ENCODE measurements at regions of chr3 and their contacts with region 1.

Region 1: GRCh38 chr3:5057857-5058324 is 64.2 kb upstream of the ARL8B start:
- DNase-seq: peak in 9 of 10 donors; percentile 50 to 78 (median 68)
- H3K4me3 ChIP-seq: no peak overlapping the region
- H3K27ac ChIP-seq: no peak overlapping the region
- H3K27me3 ChIP-seq: no peaks in the 10 kb centered on the region
- CTCF ChIP-seq: peak; percentile 46 to 81 (median 72)

Region 2: GRCh38 chr3:4656059-4656458 is 401.8 kb before region 1 on chr3:
- intact Hi-C with region 1: loop called in 1 of 2 experiments (anchors 5 kb)
- DNase-seq: peak; percentile 38 to 82 (median 68)
- H3K4me3 ChIP-seq: no peak overlapping the region
- H3K27ac ChIP-seq: no peak overlapping the region
- H3K27me3 ChIP-seq: no peaks in the 10 kb centered on the region
- CTCF ChIP-seq: peak; percentile 54 to 88 (median 82)

Region 3: DNA sequence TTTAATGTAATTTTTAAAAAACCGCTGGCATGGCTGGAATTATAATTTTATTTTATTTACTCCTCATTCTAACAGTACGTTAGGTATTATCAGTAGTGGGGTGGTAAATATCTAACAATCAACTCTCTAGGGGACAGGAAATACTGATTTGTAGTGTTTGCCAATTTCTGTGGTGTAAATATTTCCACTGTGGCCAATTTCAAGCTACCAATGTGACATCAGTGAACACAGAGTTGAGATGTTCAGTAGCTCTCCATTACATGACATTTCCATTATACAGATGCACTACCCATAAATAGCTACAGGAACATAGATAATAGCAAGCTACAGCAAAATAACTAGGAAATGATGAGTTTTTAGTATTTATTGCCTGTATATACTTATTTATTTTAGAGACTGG is 54.2 kb after region 1 on chr3:
- intact Hi-C with region 1: no loop called
- DNase-seq: no peak
- H3K4me3 ChIP-seq: no peak overlapping the region
- H3K27ac ChIP-seq: no peak overlapping the region
- H3K27me3 ChIP-seq: no peaks in the 10 kb centered on the region
- CTCF ChIP-seq: no peak